GM13977 (cell line): ENCODE measurements at regions of chr11 and their contacts with region 1.

Region 1: DNA sequence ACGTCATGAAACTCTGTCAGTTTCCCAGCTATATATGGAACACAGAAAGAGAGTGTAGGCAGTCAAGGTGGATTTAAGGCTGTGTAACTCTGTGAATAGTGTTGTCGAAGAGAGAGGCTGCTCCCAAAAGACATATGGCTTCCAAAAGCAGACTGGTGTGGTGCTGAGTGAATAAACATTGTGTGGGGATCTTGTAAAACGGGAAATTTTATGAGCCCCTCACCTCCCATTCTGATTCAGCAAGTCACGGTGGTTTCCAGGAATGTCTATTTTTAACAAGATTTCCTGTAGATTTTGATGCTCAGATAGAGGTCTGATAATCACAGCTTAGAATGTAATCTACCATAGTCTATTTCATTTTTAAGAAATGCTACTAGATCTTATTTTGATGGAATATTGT is 67.9 kb downstream of the SESN3 start:
- DNase-seq: no peak
- CTCF ChIP-seq: no peak

Region 2: DNA sequence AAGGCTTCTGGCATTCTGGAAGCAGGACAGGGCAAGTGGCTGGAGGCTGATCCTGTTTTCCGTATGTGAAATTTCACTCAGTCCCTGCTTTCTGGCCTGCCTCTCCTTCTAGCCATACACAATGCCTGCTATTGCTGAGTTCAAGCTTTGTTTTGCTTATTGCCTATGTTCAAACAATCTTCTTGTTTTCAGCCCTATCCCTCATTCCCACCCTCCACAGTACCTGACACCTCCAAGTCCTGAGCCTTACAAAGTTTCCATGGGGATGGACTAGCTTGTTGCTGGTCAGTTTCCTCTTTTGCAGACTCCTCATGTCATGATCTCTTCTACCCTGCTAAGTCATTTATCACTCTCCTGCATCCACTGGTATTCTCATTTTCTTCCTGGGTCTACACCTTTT is 588.4 kb after region 1 on chr11:
- in situ Hi-C with region 1: loop called (anchors 10 kb)
- DNase-seq: no peak
- CTCF ChIP-seq: no peak